ENCODE measurements at regions of chr14 and their contacts with region 1.

Region 1: DNA sequence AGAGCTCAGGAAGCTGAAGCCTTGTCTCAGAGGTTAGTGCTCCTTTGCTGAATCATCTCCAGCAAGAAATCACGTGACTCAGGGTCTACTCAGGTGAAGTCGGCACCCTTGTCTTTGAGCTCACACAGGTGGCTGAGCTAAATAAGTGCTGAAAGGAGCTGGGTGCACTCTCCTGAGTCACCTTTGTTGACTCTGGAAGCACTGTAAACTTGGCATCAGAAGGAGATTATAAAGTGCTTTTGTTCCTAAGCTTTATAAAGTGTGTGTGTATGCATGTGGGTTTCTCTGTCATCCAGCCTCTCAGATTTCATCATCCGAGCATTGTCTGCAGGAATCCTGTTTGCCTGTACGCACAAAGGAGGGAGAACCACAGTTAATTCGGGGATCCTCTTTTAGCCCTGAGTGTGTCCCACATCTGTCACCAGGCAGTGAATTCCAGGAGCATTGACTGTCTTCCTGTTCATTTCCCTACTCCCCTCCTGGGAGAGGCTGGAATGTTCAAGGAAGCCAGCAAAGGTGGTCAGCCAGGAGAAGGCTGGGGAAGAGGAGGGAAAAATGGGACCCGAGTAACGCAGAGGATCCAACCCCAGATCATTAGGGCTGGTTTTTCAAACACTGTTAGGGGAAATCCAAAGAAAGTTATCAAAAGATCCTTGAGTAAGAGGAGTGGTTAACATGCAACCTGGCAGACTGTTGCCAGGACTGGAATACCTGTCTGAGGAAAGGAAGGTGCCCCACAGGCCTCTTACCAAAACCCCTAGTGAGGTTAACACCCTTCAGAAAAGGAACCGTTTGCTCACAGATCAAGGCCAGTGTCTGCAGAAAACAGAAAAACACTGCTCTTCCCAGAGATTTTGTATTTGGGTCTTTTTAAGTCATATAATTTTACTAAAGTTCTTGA is 157.5 kb upstream of the HIF1A start:
- DNase-seq: peak; percentile 97
- ATAC-seq: peak; percentile 87
- H3K4me3 ChIP-seq: peak overlapping the region; percentile 2 to 44 (median 14); a peak in 3 of 6 replicates
- H3K27ac ChIP-seq: peak overlapping the region; percentile 91
- H3K4me1 ChIP-seq: peaks cover 66% of the 10 kb centered on the region
- H3K27me3 ChIP-seq: no peaks in the 10 kb centered on the region
- CTCF ChIP-seq: no peak
- EP300 ChIP-seq: peak; percentile 79 to 98; a peak in 3 of 4 replicates
- POLR2A ChIP-seq: peak in 1 of 2 experiments; percentile 54; a peak in 2 of 4 replicates
- RAD21 ChIP-seq: no peak

Region 2: DNA sequence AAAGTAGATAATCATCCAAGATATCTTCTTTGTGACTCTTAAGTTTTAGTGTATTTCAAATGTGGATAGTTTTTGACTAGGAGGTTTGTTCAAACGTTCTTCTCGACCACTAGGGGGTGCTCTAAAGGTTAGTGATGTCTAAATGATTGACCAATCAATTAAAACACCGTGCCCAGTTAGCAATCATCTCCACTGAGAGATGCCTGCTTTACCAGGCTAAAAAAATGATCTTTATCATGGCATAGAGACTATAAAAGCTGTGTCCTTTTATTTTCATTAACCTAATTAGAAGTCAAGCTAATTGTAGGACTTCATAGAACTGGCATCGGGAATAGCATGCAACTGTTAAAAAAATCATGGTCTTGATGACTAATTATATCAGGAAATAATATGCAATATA is 62.5 kb before region 1 on chr14:
- CTCF ChIA-PET with region 1: no interaction called
- POLR2A ChIA-PET with region 1: no interaction called
- in situ Hi-C with region 1: loop called (anchors 10 kb)
- intact Hi-C with region 1: loop called (anchors 1 kb)
- DNase-seq: peak; percentile 67
- ATAC-seq: peak; percentile 52; the same call in 2 of the 3 replicates
- H3K4me3 ChIP-seq: no peak overlapping the region
- H3K27ac ChIP-seq: no peak overlapping the region
- H3K4me1 ChIP-seq: peaks cover 47% of the 10 kb centered on the region
- H3K27me3 ChIP-seq: no peaks in the 10 kb centered on the region
- CTCF ChIP-seq: peak; percentile 70
- EP300 ChIP-seq: no peak
- POLR2A ChIP-seq: no peak
- RAD21 ChIP-seq: peak; percentile 60

Region 3: DNA sequence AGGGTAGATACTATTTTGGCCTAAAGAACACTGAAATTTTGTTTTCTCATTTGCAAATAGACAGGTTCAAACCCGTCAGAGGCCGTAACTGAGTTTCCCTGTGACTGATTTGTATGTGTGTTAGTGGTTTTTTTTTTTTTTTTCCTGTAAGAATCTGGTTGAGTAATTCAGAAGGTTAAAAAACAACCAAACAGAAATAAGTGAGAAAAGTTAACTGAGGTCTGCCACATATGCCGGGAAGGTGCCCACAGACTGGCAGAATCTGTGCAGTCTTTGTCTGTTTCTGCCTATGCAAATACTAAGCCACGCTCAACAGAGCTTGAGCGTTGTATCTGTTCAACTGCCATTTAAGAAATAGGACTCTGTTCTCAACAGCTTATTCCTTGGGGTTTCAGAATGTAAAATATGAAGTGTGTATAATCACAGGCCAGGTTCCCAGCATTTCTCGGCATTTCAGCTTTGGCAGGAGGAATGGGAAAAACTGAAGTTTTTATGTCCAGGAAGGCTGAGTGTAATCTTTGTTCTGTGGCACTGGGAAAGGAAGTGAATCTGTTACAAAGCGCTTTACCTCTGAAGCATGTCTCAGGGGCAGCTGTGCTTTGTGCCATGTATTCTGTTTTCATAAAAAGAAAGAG is 34.5 kb before region 1 on chr14:
- CTCF ChIA-PET with region 1: no interaction called
- POLR2A ChIA-PET with region 1: no interaction called
- in situ Hi-C with region 1: no loop called
- intact Hi-C with region 1: no loop called
- DNase-seq: no peak
- ATAC-seq: no peak
- H3K4me3 ChIP-seq: no peak overlapping the region
- H3K27ac ChIP-seq: no peak overlapping the region
- H3K4me1 ChIP-seq: peaks cover 9% of the 10 kb centered on the region
- H3K27me3 ChIP-seq: no peaks in the 10 kb centered on the region
- CTCF ChIP-seq: no peak
- EP300 ChIP-seq: no peak
- POLR2A ChIP-seq: no peak
- RAD21 ChIP-seq: no peak

Region 4: DNA sequence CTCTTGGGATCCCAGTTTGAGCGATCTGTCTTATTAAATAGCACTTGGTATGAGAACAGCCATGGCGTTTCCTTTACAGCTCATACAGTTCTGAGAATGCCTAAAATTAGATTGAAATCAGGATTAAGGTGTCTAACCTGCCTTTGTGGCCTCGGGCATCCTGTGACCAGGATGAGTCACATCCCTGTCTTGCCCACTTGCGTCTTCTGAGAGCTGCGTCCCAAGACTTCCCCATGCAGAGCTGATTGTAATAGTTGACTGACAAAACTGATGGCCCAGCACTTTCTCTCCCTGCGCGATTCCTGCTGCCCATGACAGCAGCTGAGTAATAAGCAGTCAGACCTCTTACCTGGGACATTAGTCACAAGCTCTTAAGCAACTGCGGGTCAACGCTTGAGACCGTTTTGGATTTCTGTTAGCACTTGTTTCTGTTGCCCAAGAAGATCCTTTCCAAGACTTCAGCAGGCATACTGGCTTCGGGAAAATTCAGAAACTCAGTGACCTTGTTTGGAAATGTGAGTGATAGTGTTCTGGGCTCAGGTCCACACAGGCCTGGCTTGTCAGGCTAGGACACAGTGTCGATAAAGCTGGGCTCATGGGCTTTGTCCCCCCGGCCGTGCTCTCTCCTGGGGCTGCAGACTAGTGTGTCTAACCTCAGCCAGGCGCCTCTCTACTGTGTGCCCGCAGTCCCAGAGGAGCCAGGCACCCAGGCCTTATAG is 12.4 kb before region 1 on chr14:
- CTCF ChIA-PET with region 1: no interaction called
- POLR2A ChIA-PET with region 1: interaction called, 60 read pairs
- in situ Hi-C with region 1: no loop called
- intact Hi-C with region 1: loop called (anchors 1 kb)
- DNase-seq: no peak
- ATAC-seq: peak; percentile 6; the same call in 1 of the 3 replicates
- H3K4me3 ChIP-seq: no peak overlapping the region
- H3K27ac ChIP-seq: peak overlapping the region; percentile 4
- H3K4me1 ChIP-seq: peaks cover 64% of the 10 kb centered on the region
- H3K27me3 ChIP-seq: no peaks in the 10 kb centered on the region
- CTCF ChIP-seq: no peak
- EP300 ChIP-seq: no peak
- POLR2A ChIP-seq: no peak
- RAD21 ChIP-seq: no peak

Region 5: DNA sequence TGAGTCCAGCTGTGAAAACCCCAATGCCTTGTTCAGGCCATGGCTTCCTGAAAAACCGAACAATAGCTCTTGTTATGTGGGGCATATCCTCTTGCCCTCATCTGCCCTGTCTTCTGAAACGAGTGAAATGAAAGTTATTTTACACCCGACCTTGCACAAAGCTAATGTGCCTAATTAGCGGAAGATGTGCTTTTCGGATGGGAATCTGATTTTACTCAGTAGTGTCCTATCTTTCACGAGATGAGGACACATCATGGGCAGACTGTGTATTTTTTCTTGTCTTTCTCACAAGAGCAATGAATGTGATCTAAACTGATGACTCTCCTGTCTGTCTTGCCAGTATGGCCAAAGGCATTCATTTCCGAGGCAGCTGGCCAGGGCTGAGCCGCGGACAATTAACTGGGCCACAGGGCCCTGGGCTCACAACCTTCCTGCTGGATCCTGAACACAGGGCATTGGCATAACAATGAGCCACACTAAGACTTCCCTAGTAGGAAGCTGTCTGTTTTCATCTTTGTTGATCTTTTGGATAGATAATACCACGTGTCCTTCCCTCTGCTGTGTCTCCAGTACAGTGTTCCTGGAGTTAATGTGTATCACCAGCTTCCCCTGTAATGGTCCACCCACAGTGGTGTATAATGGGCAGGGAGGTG is 71.5 kb after region 1 on chr14:
- CTCF ChIA-PET with region 1: no interaction called
- POLR2A ChIA-PET with region 1: interaction called, 5 read pairs
- in situ Hi-C with region 1: no loop called
- intact Hi-C with region 1: loop called (anchors 2 kb)
- DNase-seq: peak; percentile 63
- ATAC-seq: peak; percentile 72
- H3K4me3 ChIP-seq: peak overlapping the region; percentile 29 to 59 (median 46)
- H3K27ac ChIP-seq: peak overlapping the region; percentile 43
- H3K4me1 ChIP-seq: peaks cover 39% of the 10 kb centered on the region
- H3K27me3 ChIP-seq: no peaks in the 10 kb centered on the region
- CTCF ChIP-seq: no peak
- EP300 ChIP-seq: no peak; a peak in 1 of 4 replicates
- POLR2A ChIP-seq: no peak
- RAD21 ChIP-seq: no peak

Region 6: DNA sequence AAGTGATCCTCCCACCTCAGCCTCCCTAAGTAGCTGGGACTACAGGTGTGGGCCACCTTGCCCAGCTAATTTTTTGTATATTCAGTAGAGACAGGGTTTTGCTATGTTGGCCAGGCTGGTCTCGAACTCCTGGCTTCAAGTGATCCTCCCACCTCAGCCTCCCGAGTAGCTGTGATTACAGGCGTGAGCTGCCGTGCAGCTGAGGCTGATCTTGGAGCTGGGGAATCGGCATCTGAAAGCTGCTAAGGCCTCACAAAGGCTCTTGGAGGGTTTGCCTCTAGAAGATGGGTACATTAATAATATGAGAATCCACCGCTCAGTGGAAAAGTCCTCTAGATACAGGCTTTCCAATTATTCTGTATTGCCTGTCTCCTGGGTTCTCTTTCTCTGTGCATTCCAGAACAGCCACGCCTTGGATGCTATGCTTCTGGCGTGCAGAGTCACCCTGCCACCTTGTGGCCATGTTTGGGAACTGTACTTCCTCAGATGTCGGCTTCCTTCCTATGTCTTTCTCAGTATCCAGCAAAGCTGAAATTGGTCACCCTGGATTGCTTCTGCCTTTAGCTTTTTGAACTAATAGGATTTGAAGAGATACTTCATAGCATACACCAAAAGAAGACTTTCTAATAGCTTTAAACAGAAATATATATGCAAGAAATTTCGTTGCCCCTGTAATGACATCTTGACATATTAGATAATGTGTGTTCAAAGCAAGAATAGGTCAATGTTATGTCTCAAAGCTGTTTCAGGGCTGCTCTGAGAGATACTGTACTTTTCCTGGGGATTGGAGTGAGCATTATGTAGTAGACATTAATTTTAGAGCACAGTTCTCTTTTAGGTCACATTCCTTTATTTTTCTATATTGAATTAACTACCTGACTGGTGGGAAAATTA is 299.8 kb after region 1 on chr14:
- CTCF ChIA-PET with region 1: no interaction called
- POLR2A ChIA-PET with region 1: no interaction called
- in situ Hi-C with region 1: no loop called
- intact Hi-C with region 1: loop called (anchors 10 kb)
- DNase-seq: peak; percentile 62
- ATAC-seq: peak; percentile 99
- H3K4me3 ChIP-seq: no peak overlapping the region
- H3K27ac ChIP-seq: no peak overlapping the region
- H3K4me1 ChIP-seq: no peaks in the 10 kb centered on the region
- H3K27me3 ChIP-seq: no peaks in the 10 kb centered on the region
- CTCF ChIP-seq: peak; percentile 94
- EP300 ChIP-seq: no peak
- POLR2A ChIP-seq: no peak
- RAD21 ChIP-seq: peak; percentile 88

Measured in HepG2 (cell line).